HepG2 (cell line): ENCODE measurements at regions of chr17 and their contacts with region 1.

Region 1: GRCh38 chr17:48024937-48025906 is 12.4 kb downstream of the COPZ2 start:
- DNase-seq: peak; percentile 94
- ATAC-seq: peak; percentile 82
- H3K4me3 ChIP-seq: peak overlapping the region; percentile 52 to 77 (median 57)
- H3K27ac ChIP-seq: no peak overlapping the region
- H3K4me1 ChIP-seq: peaks cover 41% of the 10 kb centered on the region
- H3K27me3 ChIP-seq: peaks cover 4 to 27% of the 10 kb centered on the region in 2 experiments
- CTCF ChIP-seq: peak; percentile 99
- EP300 ChIP-seq: 0 out of 4 replicates have a peak, but pooled peaks of 1 of the 2 experiments have one; percentile 40
- POLR2A ChIP-seq: no peak
- RAD21 ChIP-seq: peak; percentile 99

Region 2: GRCh38 chr17:47789611-47790561 is 235.3 kb before region 1 on chr17:
- CTCF ChIA-PET with region 1: no interaction called
- POLR2A ChIA-PET with region 1: no interaction called
- in situ Hi-C with region 1: no loop called
- intact Hi-C with region 1: no loop called
- DNase-seq: no peak
- ATAC-seq: peak; percentile 98
- H3K4me3 ChIP-seq: peak overlapping the region in 2 of 3 experiments; percentile 49 to 63; a peak in 3 of 6 replicates
- H3K27ac ChIP-seq: no peak overlapping the region
- H3K4me1 ChIP-seq: no peaks in the 10 kb centered on the region
- H3K27me3 ChIP-seq: peaks cover 0 to 43% of the 10 kb centered on the region in 2 experiments; a peak in 3 of 5 replicates
- CTCF ChIP-seq: peak; percentile 77
- EP300 ChIP-seq: no peak
- POLR2A ChIP-seq: no peak
- RAD21 ChIP-seq: peak; percentile 72

Region 3: DNA sequence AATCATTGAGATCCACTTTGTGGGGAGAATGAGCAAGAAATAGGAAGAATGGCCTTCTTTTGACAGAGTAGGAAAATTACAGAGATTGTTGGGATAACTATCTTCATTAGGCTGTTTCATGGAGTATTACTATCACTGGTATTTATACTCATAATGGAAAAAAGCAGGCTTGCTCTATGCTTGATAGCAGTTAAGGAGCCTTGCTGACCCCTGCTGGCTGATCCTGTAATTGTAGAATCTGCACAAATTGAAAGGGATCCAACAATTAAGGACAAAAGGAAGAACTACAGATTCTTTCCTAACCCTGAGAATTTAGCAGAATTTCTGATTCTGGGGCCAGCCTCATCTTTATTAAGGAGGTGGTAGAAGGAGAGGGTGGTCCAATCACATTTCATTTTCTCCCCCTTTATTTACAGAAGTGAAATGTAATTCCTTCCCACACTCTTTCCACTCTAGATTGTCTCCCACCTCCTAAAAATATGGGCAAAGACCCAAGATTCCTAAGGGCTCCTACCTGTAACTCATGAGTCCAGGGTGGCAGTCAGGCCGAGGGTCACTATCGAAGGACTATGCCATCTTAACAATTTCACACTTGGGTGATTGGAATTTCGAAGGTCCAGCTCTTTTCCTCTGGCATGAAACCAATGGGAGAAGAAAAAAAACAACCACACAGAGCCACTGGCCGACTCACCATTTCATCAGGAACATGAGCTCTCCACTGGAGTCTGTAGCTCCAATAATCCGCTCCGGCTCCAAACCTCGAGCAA is 49.3 kb after region 1 on chr17:
- CTCF ChIA-PET with region 1: interaction called, 127 read pairs
- POLR2A ChIA-PET with region 1: interaction called, 3 read pairs
- in situ Hi-C with region 1: loop called (anchors 5 kb)
- intact Hi-C with region 1: loop called (anchors 1 kb)
- DNase-seq: peak; percentile 75
- ATAC-seq: peak; percentile 86
- H3K4me3 ChIP-seq: no peak overlapping the region
- H3K27ac ChIP-seq: no peak overlapping the region
- H3K4me1 ChIP-seq: 0 out of 2 replicates have a peak, but pooled peaks cover 8% of the 10 kb centered on the region
- H3K27me3 ChIP-seq: no peaks in the 10 kb centered on the region
- CTCF ChIP-seq: peak; percentile 87
- EP300 ChIP-seq: no peak
- POLR2A ChIP-seq: no peak
- RAD21 ChIP-seq: peak; percentile 89

Region 4: DNA sequence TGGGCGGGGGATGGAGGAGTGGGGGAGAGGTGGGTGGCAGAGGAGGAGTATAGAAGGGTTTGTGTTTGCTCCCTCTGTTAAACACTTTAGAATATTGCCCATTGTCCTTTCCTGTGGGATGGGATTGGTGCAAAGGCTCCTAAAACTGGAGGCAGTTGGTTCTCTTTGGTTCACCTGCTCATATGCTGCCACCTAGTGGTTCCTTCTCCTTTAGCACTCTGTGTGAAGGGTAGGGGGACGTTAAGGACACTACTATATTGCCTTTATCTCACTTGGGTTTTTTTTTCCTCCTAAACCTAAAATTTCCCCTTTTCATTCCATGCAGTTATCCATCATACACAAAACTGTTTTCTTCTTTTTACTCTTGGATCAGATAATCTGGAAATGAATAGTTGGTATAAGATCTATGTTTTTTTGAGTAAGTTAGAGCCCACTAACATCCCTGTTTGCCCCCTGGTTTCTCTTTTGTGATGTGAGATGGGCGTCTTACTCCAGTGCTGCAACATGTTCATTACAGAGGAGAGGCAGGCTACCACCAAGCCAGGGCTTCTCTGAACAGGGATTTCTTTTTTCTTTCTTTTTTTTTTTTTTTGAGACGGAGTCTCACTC is 106.1 kb after region 1 on chr17:
- CTCF ChIA-PET with region 1: interaction called, 42 read pairs
- POLR2A ChIA-PET with region 1: interaction called, 4 read pairs
- in situ Hi-C with region 1: loop called (anchors 5 kb)
- intact Hi-C with region 1: loop called (anchors 1 kb)
- DNase-seq: peak; percentile 74
- ATAC-seq: peak; percentile 91
- H3K4me3 ChIP-seq: no peak overlapping the region
- H3K27ac ChIP-seq: no peak overlapping the region
- H3K4me1 ChIP-seq: no peaks in the 10 kb centered on the region
- H3K27me3 ChIP-seq: peaks cover 0 to 6% of the 10 kb centered on the region in 2 experiments; a peak in 1 of 5 replicates
- CTCF ChIP-seq: peak; percentile 91
- EP300 ChIP-seq: no peak
- POLR2A ChIP-seq: no peak
- RAD21 ChIP-seq: peak; percentile 75

Region 5: GRCh38 chr17:48457080-48457836 is 432.0 kb after region 1 on chr17:
- CTCF ChIA-PET with region 1: no interaction called
- POLR2A ChIA-PET with region 1: no interaction called
- in situ Hi-C with region 1: no loop called
- intact Hi-C with region 1: loop called (anchors 10 kb)
- DNase-seq: peak; percentile 42
- ATAC-seq: peak; percentile 97
- H3K4me3 ChIP-seq: no peak overlapping the region
- H3K27ac ChIP-seq: no peak overlapping the region
- H3K4me1 ChIP-seq: no peaks in the 10 kb centered on the region
- H3K27me3 ChIP-seq: peaks cover 0 to 18% of the 10 kb centered on the region in 2 experiments; a peak in 2 of 5 replicates
- CTCF ChIP-seq: peak; percentile 88
- EP300 ChIP-seq: no peak
- POLR2A ChIP-seq: no peak
- RAD21 ChIP-seq: peak; percentile 41; the same call in 1 of the 2 replicates

Region 6: DNA sequence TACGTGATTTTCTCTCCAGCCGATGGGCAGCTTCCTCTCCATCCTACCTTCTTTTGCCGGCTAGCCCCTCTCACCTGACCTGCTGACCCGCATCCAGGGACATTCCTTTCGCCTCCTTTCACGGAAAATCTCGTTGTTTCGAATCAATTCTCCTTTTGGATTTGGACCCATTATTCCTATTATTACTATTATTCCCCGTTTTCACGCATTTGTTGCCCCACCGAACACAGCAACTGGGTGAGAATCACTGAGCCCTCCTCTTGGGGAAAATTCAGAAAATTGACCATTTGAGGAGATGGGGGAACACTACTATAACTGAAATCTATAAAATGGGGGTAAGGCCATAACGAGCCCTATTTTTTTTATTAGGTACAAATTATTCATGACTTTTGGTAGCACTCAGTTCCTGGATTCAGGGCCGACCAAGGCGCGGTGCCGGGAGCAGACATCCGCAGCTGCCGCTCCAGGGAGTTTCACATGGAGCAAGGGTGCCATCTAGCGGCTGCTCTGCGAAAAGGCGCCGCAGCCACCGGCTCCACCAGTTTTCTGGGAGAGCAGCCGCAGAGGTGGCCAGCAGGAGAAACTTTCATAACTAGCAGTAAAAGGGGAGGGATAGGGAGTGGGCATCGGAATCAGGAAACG is 593.2 kb after region 1 on chr17:
- CTCF ChIA-PET with region 1: interaction called, 5 read pairs
- POLR2A ChIA-PET with region 1: no interaction called
- in situ Hi-C with region 1: loop called (anchors 5 kb)
- intact Hi-C with region 1: loop called (anchors 5 kb)
- DNase-seq: peak; percentile 67
- ATAC-seq: peak; percentile 86
- H3K4me3 ChIP-seq: no peak overlapping the region
- H3K27ac ChIP-seq: no peak overlapping the region
- H3K4me1 ChIP-seq: no peaks in the 10 kb centered on the region
- H3K27me3 ChIP-seq: peaks cover 48 to 98% of the 10 kb centered on the region in 2 experiments
- CTCF ChIP-seq: peak; percentile 94
- EP300 ChIP-seq: no peak
- POLR2A ChIP-seq: no peak
- RAD21 ChIP-seq: peak; percentile 97